ENCODE measurements at regions of chr1 and their contacts with region 1.

Region 1: GRCh38 chr1:47192458-47193384 is 2.9 kb upstream of the PDZK1IP1 start:
- DNase-seq: peak; percentile 61
- ATAC-seq: peak; percentile 75
- H3K4me3 Mint-ChIP-seq: no peak overlapping the region
- H3K27ac Mint-ChIP-seq: no peak overlapping the region
- H3K4me1 Mint-ChIP-seq: no peaks in the 10 kb centered on the region
- H3K27me3 Mint-ChIP-seq: peaks cover 16% of the 10 kb centered on the region
- CTCF ChIP-seq: peak; percentile 18

Region 2: GRCh38 chr1:47161298-47162040 is 31.3 kb before region 1 on chr1:
- CTCF ChIA-PET with region 1: no interaction called
- POLR2A ChIA-PET with region 1: no interaction called
- intact Hi-C with region 1: no loop called
- DNase-seq: no peak
- ATAC-seq: no peak
- H3K4me3 Mint-ChIP-seq: no peak overlapping the region
- H3K27ac Mint-ChIP-seq: no peak overlapping the region
- H3K4me1 Mint-ChIP-seq: no peaks in the 10 kb centered on the region
- H3K27me3 Mint-ChIP-seq: peaks cover 7% of the 10 kb centered on the region
- CTCF ChIP-seq: no peak

Region 3: DNA sequence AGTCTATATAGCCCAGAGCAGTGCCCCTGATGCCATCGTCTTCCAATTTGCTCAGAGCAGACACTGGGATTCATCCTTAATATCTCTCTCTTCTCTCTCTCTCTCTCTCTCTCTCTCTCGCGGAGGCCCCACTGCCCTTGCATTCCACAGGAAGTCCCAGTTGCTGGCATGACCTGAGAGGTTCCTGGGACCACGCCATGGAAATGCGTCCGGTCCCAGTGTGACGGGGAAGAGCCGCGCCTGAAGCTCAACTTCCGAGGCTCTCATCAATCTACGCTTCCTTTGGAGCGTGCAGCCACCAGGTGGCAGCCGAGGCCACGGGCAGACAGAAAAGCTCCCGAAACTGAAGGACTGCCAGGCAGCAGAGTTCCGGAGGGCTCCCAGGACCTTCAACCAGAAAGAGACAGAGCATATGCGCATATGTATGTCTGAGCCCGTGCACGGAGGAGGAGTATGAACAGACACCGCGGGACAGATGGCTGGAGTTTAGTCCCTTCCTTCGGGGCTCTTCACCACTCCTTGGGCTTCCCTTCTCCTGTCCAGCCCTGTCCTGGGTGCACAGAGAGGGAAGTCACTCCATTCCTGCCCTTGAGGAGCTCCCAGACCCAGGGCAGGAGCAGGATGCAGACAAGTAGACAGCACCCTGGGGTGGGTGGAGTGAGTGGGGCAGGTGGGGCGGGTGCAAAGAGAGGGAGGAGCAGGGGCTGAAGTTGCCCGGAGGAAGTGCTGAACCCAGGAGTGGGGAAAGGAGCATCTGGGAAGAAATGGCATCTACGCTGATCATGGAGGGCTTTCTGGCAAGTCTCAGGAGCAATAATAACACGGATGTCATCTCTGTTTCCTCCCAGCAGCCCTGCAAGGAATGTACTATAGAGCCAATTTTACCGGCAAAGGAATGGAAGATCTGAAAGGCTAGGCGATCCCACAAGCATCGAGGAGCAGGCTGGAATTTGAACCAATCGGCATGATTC is 13.4 kb before region 1 on chr1:
- CTCF ChIA-PET with region 1: interaction called, 25 read pairs
- POLR2A ChIA-PET with region 1: no interaction called
- intact Hi-C with region 1: no loop called
- DNase-seq: peak; percentile 55
- ATAC-seq: peak; percentile 70
- H3K4me3 Mint-ChIP-seq: peak overlapping the region; percentile 82
- H3K27ac Mint-ChIP-seq: no peak overlapping the region
- H3K4me1 Mint-ChIP-seq: peaks cover 11% of the 10 kb centered on the region
- H3K27me3 Mint-ChIP-seq: peaks cover 32% of the 10 kb centered on the region
- CTCF ChIP-seq: no peak

Region 4: GRCh38 chr1:47333922-47334764 is 141.4 kb after region 1 on chr1:
- CTCF ChIA-PET with region 1: interaction called, 4 read pairs
- POLR2A ChIA-PET with region 1: no interaction called
- intact Hi-C with region 1: loop called (anchors 10 kb)
- DNase-seq: peak; percentile 78
- ATAC-seq: peak; percentile 86
- H3K4me3 Mint-ChIP-seq: no peak overlapping the region
- H3K27ac Mint-ChIP-seq: peak overlapping the region; percentile 92
- H3K4me1 Mint-ChIP-seq: peaks cover 19% of the 10 kb centered on the region
- H3K27me3 Mint-ChIP-seq: no peaks in the 10 kb centered on the region
- CTCF ChIP-seq: no peak

Region 5: GRCh38 chr1:47437447-47438164 is 244.9 kb after region 1 on chr1 and contains the start of gene FOXD2:
- CTCF ChIA-PET with region 1: interaction called, 3 read pairs
- POLR2A ChIA-PET with region 1: no interaction called
- intact Hi-C with region 1: loop called (anchors 5 kb)
- DNase-seq: peak; percentile 97
- ATAC-seq: peak; percentile 92
- H3K4me3 Mint-ChIP-seq: peak within 1 kb of the TSS; percentile 88
- H3K27ac Mint-ChIP-seq: peak within 1 kb of the TSS; percentile 70
- H3K4me1 Mint-ChIP-seq: peaks cover 31% of the 10 kb centered on the region
- H3K27me3 Mint-ChIP-seq: peaks cover 25% of the 10 kb centered on the region
- CTCF ChIP-seq: peak; percentile 77
- total RNA-seq, gene FOXD2: 0.10 and 0.20 TPM in 2 replicates

Region 6: DNA sequence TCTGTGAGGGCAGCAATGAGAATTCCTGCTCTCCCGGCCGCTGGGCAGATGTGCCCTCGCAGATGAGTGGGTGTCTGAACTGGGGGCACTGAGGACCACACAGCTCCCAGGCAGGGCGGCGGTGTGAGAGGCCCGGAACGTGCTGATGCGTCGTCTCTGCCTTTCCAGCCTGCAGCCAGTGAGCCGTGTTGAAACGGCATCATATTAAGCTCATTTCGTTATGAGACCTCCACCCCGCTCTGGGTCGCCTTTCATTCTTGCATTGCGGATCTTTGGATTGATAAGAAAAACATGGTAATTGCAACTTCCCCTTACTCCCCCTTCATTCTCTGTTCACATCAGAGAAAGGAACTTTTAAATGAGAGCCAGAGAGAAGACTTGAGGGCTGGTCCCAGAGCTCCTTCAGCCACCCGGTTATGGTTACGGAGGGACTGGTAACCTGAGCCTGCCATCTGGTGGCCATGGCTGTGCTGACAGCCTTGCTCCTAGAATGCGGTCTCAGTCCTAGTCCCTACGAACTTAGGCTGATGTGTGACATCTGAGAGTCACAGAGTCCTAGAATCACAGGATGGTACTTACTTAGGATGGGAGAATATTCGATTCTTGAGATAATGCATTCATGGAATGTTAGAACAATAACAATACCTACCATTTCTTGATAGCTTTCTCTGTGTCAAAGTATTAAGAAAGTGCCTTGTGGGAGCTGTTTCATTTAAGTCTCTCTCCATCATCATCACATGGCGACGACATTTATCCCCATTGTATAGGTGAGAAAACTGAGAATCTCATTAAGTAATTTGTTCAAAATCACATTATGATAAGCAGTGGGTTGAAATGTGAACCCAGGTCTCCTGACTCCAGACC is 533.5 kb after region 1 on chr1:
- CTCF ChIA-PET with region 1: interaction called, 25 read pairs
- POLR2A ChIA-PET with region 1: no interaction called
- intact Hi-C with region 1: no loop called
- DNase-seq: no peak
- ATAC-seq: peak; percentile 85
- H3K4me3 Mint-ChIP-seq: peak overlapping the region; percentile 69
- H3K27ac Mint-ChIP-seq: no peak overlapping the region
- H3K4me1 Mint-ChIP-seq: peaks cover 11% of the 10 kb centered on the region
- H3K27me3 Mint-ChIP-seq: peaks cover 47% of the 10 kb centered on the region
- CTCF ChIP-seq: no peak

Measured in activated B cell treated with CpG ODN at 0.5 μM for 24 hours (primary cell).